ENCODE measurements at regions of chr17 and their contacts with region 1.

Region 1: GRCh38 chr17:57084802-57085447 is at the start of gene AKAP1:
- DNase-seq: peak; percentile 89 to 98 (median 94)
- ATAC-seq: peak; percentile 86
- H3K4me3 ChIP-seq: peak within 1 kb of the TSS; percentile 88 to 95
- H3K4me3 Mint-ChIP-seq: peak within 1 kb of the TSS; percentile 91
- H3K27ac ChIP-seq: peak within 1 kb of the TSS; percentile 87 to 93
- H3K27ac Mint-ChIP-seq: peak within 1 kb of the TSS; percentile 93
- H3K4me1 ChIP-seq: peaks cover 12% of the 10 kb centered on the region
- H3K4me1 Mint-ChIP-seq: peaks cover 38% of the 10 kb centered on the region
- H3K27me3 ChIP-seq: no peaks in the 10 kb centered on the region
- H3K27me3 Mint-ChIP-seq: no peaks in the 10 kb centered on the region
- CTCF ChIP-seq: no peak
- total RNA-seq, gene AKAP1: 20.6 to 23.5 TPM

Region 2: GRCh38 chr17:55421179-55421934 is 1663.6 kb before region 1 on chr17 and contains the start of gene MMD:
- CTCF ChIA-PET with region 1: no interaction called
- POLR2A ChIA-PET with region 1: no interaction called
- intact Hi-C with region 1: loop called in 1 of 2 experiments (anchors 10 kb)
- DNase-seq: peak in 3 of 9 experiments; percentile 2 to 67 (median 8)
- ATAC-seq: no peak
- H3K4me3 ChIP-seq: peak within 1 kb of the TSS; percentile 89 to 96
- H3K4me3 Mint-ChIP-seq: peak within 1 kb of the TSS; percentile 89
- H3K27ac ChIP-seq: peak within 1 kb of the TSS; percentile 69 to 70
- H3K27ac Mint-ChIP-seq: peak within 1 kb of the TSS; percentile 96
- H3K4me1 ChIP-seq: peaks cover 25% of the 10 kb centered on the region
- H3K4me1 Mint-ChIP-seq: peaks cover 45% of the 10 kb centered on the region
- H3K27me3 ChIP-seq: peaks cover 0 to 4% of the 10 kb centered on the region in 2 experiments
- H3K27me3 Mint-ChIP-seq: peaks cover 20% of the 10 kb centered on the region
- CTCF ChIP-seq: no peak
- total RNA-seq, gene MMD: 28.2 to 32.8 TPM

Region 3: GRCh38 chr17:56960596-56961538 is 124.1 kb before region 1 on chr17 and contains the start of gene COIL:
- CTCF ChIA-PET with region 1: no interaction called
- POLR2A ChIA-PET with region 1: no interaction called
- intact Hi-C with region 1: loop called in 1 of 2 experiments (anchors 1 kb)
- DNase-seq: peak; percentile 85 to 96 (median 93)
- ATAC-seq: peak; percentile 98
- H3K4me3 ChIP-seq: peak within 1 kb of the TSS; percentile 65 to 89
- H3K4me3 Mint-ChIP-seq: peak within 1 kb of the TSS; percentile 89
- H3K27ac ChIP-seq: peak within 1 kb of the TSS; percentile 78 to 79
- H3K27ac Mint-ChIP-seq: peak within 1 kb of the TSS; percentile 96
- H3K4me1 ChIP-seq: peaks cover 22% of the 10 kb centered on the region
- H3K4me1 Mint-ChIP-seq: peaks cover 25% of the 10 kb centered on the region
- H3K27me3 ChIP-seq: no peaks in the 10 kb centered on the region
- H3K27me3 Mint-ChIP-seq: no peaks in the 10 kb centered on the region
- CTCF ChIP-seq: peak; percentile 99
- total RNA-seq, gene COIL: 24.1 to 24.3 TPM

Region 4: GRCh38 chr17:56977673-56978395 is 107.1 kb before region 1 on chr17 and contains the start of gene SCPEP1:
- CTCF ChIA-PET with region 1: no interaction called
- POLR2A ChIA-PET with region 1: no interaction called
- intact Hi-C with region 1: loop called (anchors 2 to 5 kb)
- DNase-seq: peak; percentile 67 to 89 (median 80)
- ATAC-seq: peak; percentile 98
- H3K4me3 ChIP-seq: peak within 1 kb of the TSS; percentile 73 to 79
- H3K4me3 Mint-ChIP-seq: peak within 1 kb of the TSS; percentile 93
- H3K27ac ChIP-seq: peak within 1 kb of the TSS; percentile 33 to 56
- H3K27ac Mint-ChIP-seq: peak within 1 kb of the TSS; percentile 90
- H3K4me1 ChIP-seq: peaks cover 12% of the 10 kb centered on the region
- H3K4me1 Mint-ChIP-seq: peaks cover 19% of the 10 kb centered on the region
- H3K27me3 ChIP-seq: no peaks in the 10 kb centered on the region
- H3K27me3 Mint-ChIP-seq: peaks cover 2% of the 10 kb centered on the region
- CTCF ChIP-seq: no peak
- total RNA-seq, gene SCPEP1: 22.9 to 28.4 TPM

Region 5: DNA sequence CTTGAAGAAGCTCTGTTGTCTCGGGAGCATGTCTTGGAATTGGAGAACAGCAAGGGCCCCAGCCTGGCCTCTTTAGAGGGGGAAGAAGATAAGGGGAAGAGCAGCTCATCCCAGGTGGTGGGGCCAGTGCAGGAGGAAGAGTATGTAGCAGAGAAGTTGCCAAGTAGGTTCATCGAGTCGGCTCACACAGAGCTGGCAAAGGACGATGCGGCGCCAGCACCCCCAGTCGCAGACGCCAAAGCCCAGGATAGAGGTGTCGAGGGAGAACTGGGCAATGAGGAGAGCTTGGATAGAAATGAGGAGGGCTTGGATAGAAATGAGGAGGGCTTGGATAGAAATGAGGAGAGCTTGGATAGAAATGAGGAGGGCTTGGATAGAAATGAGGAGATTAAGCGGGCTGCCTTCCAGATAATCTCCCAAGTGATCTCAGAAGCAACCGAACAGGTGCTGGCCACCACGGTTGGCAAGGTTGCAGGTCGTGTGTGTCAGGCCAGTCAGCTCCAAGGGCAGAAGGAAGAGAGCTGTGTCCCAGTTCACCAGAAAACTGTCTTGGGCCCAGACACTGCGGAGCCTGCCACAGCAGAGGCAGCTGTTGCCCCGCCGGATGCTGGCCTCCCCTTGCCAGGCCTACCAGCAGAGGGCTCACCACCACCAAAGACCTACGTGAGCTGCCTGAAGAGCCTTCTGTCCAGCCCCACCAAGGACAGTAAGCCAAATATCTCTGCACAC is 21.3 kb after region 1 on chr17:
- CTCF ChIA-PET with region 1: no interaction called
- POLR2A ChIA-PET with region 1: no interaction called
- intact Hi-C with region 1: no loop called
- DNase-seq: no peak
- ATAC-seq: no peak
- H3K4me3 ChIP-seq: no peak overlapping the region
- H3K4me3 Mint-ChIP-seq: no peak overlapping the region
- H3K27ac ChIP-seq: no peak overlapping the region
- H3K27ac Mint-ChIP-seq: no peak overlapping the region
- H3K4me1 ChIP-seq: peaks cover 4% of the 10 kb centered on the region
- H3K4me1 Mint-ChIP-seq: peaks cover 17% of the 10 kb centered on the region
- H3K27me3 ChIP-seq: no peaks in the 10 kb centered on the region
- H3K27me3 Mint-ChIP-seq: no peaks in the 10 kb centered on the region
- CTCF ChIP-seq: no peak

Region 6: GRCh38 chr17:57987580-57988421 is 902.9 kb after region 1 on chr17 and contains the start of gene VEZF1:
- CTCF ChIA-PET with region 1: no interaction called
- POLR2A ChIA-PET with region 1: no interaction called
- intact Hi-C with region 1: loop called in 1 of 2 experiments (anchors 5 kb)
- DNase-seq: peak; percentile 53 to 91 (median 79)
- ATAC-seq: peak; percentile 67
- H3K4me3 ChIP-seq: peak within 1 kb of the TSS; percentile 83 to 90
- H3K4me3 Mint-ChIP-seq: peak within 1 kb of the TSS; percentile 94
- H3K27ac ChIP-seq: peak within 1 kb of the TSS; percentile 57 to 72
- H3K27ac Mint-ChIP-seq: peak within 1 kb of the TSS; percentile 93
- H3K4me1 ChIP-seq: peaks cover 49% of the 10 kb centered on the region
- H3K4me1 Mint-ChIP-seq: peaks cover 63% of the 10 kb centered on the region
- H3K27me3 ChIP-seq: no peaks in the 10 kb centered on the region
- H3K27me3 Mint-ChIP-seq: no peaks in the 10 kb centered on the region
- CTCF ChIP-seq: no peak
- total RNA-seq, gene VEZF1: 45.2 to 46.6 TPM

Region 7: GRCh38 chr17:58082870-58083490 is 998.1 kb after region 1 on chr17 and contains the start of gene DYNLL2:
- CTCF ChIA-PET with region 1: no interaction called
- POLR2A ChIA-PET with region 1: no interaction called
- intact Hi-C with region 1: loop called (anchors 1 to 5 kb)
- DNase-seq: peak; percentile 76 to 93 (median 88)
- ATAC-seq: peak; percentile 69
- H3K4me3 ChIP-seq: peak within 1 kb of the TSS; percentile 60 to 62
- H3K4me3 Mint-ChIP-seq: peak within 1 kb of the TSS; percentile 89
- H3K27ac ChIP-seq: peak within 1 kb of the TSS; percentile 81 to 85
- H3K27ac Mint-ChIP-seq: peak within 1 kb of the TSS; percentile 88
- H3K4me1 ChIP-seq: peaks cover 33% of the 10 kb centered on the region
- H3K4me1 Mint-ChIP-seq: peaks cover 33% of the 10 kb centered on the region
- H3K27me3 ChIP-seq: no peaks in the 10 kb centered on the region
- H3K27me3 Mint-ChIP-seq: no peaks in the 10 kb centered on the region
- CTCF ChIP-seq: no peak
- total RNA-seq, gene DYNLL2: 30.5 to 30.6 TPM

Measured in CD8-positive, alpha-beta T cell (primary cell).